Kidney (tissue), 22 donors: ENCODE measurements at regions of chr2 and their contacts with region 1.

Region 1: DNA sequence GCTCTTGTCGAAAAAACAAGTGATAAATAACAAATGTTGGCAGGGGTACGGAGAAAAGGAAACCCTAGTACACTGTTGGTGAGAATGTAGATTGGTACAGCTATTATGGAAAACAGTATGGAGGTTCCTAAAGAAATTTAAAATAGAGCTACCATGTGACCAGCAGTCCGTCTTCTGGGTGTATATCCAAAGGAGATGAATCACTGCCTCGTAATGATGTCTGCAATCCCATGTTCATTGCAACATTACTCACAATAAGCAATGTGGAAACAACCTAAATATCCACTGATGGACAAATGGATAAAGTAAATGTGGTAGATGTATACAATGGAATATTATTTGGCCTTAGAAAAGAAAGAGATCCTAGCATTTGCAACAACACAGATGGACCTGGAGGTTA is 50.6 kb downstream of the SLC16A14 start:
- DNase-seq: no peak
- H3K4me3 ChIP-seq: no peak overlapping the region
- H3K27ac ChIP-seq: no peak overlapping the region
- H3K4me1 ChIP-seq: no peaks in the 10 kb centered on the region
- H3K27me3 ChIP-seq: no peaks in the 10 kb centered on the region
- CTCF ChIP-seq: no peak

Region 2: DNA sequence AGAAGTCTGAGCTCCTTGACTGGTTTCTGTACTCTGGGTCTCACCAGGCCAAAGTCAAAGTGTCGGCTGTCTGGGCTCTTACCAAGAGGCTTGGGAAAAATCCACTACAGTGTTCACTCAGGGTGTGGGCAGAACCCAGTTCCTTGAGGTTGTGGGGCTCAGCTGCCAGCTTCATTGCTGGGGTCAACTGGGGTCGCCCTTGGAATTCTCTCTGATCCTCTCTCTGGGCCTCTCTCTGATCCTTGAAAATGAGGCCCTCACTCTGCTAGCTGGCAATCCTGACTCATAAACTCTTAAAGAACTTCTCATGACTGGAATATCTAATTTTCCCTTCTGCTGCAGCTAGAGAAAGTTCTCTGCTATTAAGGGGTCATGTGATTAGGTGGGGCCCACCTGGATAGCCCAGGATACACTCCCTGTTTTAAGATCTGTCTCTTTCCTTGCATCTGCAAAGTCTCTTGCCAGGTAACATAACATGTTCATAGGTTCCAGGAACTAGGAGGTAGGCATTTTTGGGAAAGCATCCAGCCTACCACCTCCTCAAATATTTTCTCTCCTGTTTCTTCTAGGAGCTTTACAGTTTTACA is 135.3 kb after region 1 on chr2:
- intact Hi-C with region 1: loop called (anchors 10 kb)
- DNase-seq: no peak
- H3K4me3 ChIP-seq: no peak overlapping the region
- H3K27ac ChIP-seq: no peak overlapping the region
- H3K4me1 ChIP-seq: no peaks in the 10 kb centered on the region
- H3K27me3 ChIP-seq: no peaks in the 10 kb centered on the region
- CTCF ChIP-seq: no peak

Region 3: GRCh38 chr2:230286048-230286447 is 267.9 kb after region 1 on chr2:
- intact Hi-C with region 1: no loop called
- DNase-seq: no peak
- H3K4me3 ChIP-seq: no peak overlapping the region
- H3K27ac ChIP-seq: no peak overlapping the region
- H3K4me1 ChIP-seq: no peaks in the 10 kb centered on the region
- H3K27me3 ChIP-seq: no peaks in the 10 kb centered on the region
- CTCF ChIP-seq: no peak

Region 4: GRCh38 chr2:230416061-230416721 is 398.0 kb after region 1 on chr2 and contains the start of gene SP100:
- intact Hi-C with region 1: no loop called
- DNase-seq: peak in 3 of 5 donors; percentile 44 to 91 (median 74)
- H3K4me3 ChIP-seq: peak within 1 kb of the TSS; percentile 69 to 89 (median 86)
- H3K27ac ChIP-seq: peak within 1 kb of the TSS; percentile 83 to 95
- H3K4me1 ChIP-seq: peaks cover 0 to 24% (median 18%) of the 10 kb centered on the region in 3 donors
- H3K27me3 ChIP-seq: no peaks in the 10 kb centered on the region
- CTCF ChIP-seq: no peak
- total RNA-seq, gene SP100: 118 TPM